Calu3 (cell line): ENCODE measurements at regions of chr6 and their contacts with region 1.

Region 1: GRCh38 chr6:157242791-157243190 is 80.5 kb downstream of the TMEM242 start:
- DNase-seq: no peak
- H3K4me3 Mint-ChIP-seq: no peak overlapping the region
- H3K27ac Mint-ChIP-seq: no peak overlapping the region
- H3K4me1 Mint-ChIP-seq: peaks cover 15% of the 10 kb centered on the region
- H3K27me3 Mint-ChIP-seq: no peaks in the 10 kb centered on the region
- CTCF ChIP-seq: no peak

Region 2: GRCh38 chr6:157221007-157221816 is 21.6 kb before region 1 on chr6:
- CTCF ChIA-PET with region 1: no interaction called
- intact Hi-C with region 1: loop called (anchors 2 kb)
- DNase-seq: peak; percentile 93
- H3K4me3 Mint-ChIP-seq: peak overlapping the region; percentile 57
- H3K27ac Mint-ChIP-seq: peak overlapping the region; percentile 61
- H3K4me1 Mint-ChIP-seq: peaks cover 18% of the 10 kb centered on the region
- H3K27me3 Mint-ChIP-seq: no peaks in the 10 kb centered on the region
- CTCF ChIP-seq: no peak

Region 3: DNA sequence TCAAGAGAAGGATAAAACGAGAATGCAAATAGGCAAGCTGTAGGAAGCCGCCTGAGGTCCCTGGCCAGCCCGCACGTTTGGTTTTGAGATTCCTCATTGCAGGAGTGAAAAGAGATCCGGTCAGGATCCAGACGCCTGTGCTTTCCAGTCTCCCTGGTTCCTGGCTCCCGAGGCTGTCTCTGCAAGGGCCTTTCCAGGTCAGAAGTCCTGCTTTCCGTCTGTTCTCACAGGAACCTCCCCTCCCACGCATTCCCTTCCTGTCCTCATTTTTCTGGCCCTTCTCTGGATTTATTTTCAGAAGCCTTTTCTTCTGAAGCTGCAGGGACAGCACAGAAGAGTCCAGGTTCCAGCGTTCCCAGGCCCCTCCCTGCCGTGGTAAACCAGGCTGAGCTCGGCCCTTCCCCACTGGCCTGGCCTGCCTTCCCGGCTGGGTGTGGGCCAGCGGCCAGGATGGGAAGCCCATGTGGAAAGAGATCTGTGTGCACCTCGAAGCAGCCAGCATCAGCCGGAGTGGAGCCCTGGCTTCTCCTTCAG is 26.5 kb after region 1 on chr6:
- CTCF ChIA-PET with region 1: no interaction called
- intact Hi-C with region 1: no loop called
- DNase-seq: no peak
- H3K4me3 Mint-ChIP-seq: no peak overlapping the region
- H3K27ac Mint-ChIP-seq: no peak overlapping the region
- H3K4me1 Mint-ChIP-seq: no peaks in the 10 kb centered on the region
- H3K27me3 Mint-ChIP-seq: peaks cover 14% of the 10 kb centered on the region
- CTCF ChIP-seq: no peak

Region 4: DNA sequence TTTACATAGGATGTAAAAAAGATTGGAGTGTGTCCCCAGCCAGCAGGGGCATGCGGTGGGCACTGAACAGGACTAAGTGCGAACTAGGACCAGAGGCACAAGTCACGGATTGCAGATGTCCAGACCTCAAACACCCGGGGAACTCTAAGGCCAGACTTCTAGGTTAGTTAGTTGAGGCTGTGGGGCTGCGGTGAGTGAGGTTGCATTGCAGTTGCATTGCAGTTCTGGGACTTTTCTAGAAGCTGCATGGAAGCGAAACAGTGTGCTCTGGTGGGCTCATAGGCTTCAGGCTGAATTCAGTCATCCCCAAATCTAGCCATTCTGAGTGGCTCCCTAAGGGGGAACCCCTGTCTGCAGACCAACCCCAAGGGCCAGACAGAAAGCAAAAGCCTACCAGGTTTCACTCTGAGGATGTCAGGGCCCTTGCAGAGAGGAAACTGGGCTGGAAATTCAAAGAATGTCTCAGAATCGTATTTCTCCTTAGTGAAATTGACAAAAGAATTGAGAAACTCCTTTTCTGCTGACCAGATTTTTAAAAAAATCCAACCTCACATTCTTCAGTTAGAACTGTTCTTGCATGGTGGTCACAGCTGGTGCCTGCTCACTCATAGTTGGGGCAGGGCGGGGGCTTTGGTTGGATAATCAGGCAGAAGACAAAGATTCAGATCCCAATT is 321.0 kb after region 1 on chr6:
- CTCF ChIA-PET with region 1: no interaction called
- intact Hi-C with region 1: no loop called
- DNase-seq: no peak
- H3K4me3 Mint-ChIP-seq: no peak overlapping the region
- H3K27ac Mint-ChIP-seq: no peak overlapping the region
- H3K4me1 Mint-ChIP-seq: no peaks in the 10 kb centered on the region
- H3K27me3 Mint-ChIP-seq: no peaks in the 10 kb centered on the region
- CTCF ChIP-seq: no peak